Activated CD8-positive, alpha-beta T cell treated with anti-CD3 and anti-CD28 coated beads, Interleukin-2, amount 10 ng/mL, durations not matched to agents 7 days and 5 days (primary cell): ENCODE measurements at regions of chr9 and their contacts with region 1.

Region 1: GRCh38 chr9:36487482-36488388 is 85.0 kb upstream of the MELK start:
- DNase-seq: peak; percentile 90
- ATAC-seq: peak; percentile 94
- H3K4me3 Mint-ChIP-seq: peak overlapping the region; percentile 96
- H3K27ac Mint-ChIP-seq: peak overlapping the region; percentile 99
- H3K4me1 Mint-ChIP-seq: peaks cover 58% of the 10 kb centered on the region
- H3K27me3 Mint-ChIP-seq: no peaks in the 10 kb centered on the region

Region 2: DNA sequence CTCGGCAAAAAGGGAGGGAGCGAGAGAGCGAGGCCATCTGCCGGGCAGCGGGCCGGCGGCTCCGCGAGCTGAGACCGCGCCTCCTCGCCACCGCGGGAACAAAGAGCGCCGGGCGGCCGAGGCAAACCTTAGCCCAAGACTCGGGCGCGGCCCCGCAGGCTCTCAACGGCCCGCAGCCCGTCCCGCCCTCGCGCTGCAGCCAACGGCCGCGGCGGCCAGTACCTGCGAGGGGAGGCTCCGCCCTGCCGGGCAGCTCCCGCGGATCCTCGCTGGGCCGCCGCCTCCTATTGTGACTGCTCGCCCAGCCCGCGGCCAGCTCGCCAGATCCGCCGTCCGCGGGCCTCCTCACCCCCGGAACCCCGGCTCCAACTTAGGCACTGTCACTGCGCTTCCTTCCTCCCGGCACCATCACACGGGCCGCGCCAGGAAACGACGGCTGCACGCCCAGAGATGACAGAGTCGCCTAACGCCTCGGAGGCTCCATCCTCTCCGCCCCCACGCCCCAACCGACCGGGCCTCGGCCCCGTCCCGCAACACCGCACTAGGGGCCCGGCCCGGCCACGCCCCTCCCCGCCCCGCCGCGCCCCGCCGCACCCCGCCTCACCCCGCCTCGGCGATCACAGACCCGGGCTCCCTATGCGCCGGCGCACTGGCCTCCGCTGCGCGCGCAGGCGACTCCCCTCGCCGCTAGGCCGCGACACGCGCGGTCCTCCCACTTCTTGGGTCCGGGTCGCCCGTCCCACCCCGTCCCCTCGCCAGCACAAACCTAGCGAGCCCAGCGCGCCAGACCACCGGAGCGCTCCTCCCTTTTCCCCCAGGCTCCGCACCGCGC is 87.2 kb before region 1 on chr9:
- CTCF ChIA-PET with region 1: no interaction called
- POLR2A ChIA-PET with region 1: interaction called, 11 read pairs
- DNase-seq: peak; percentile 91
- ATAC-seq: peak; percentile 80
- H3K4me3 Mint-ChIP-seq: peak overlapping the region; percentile 91
- H3K27ac Mint-ChIP-seq: peak overlapping the region; percentile 95
- H3K4me1 Mint-ChIP-seq: peaks cover 42% of the 10 kb centered on the region
- H3K27me3 Mint-ChIP-seq: no peaks in the 10 kb centered on the region

Region 3: DNA sequence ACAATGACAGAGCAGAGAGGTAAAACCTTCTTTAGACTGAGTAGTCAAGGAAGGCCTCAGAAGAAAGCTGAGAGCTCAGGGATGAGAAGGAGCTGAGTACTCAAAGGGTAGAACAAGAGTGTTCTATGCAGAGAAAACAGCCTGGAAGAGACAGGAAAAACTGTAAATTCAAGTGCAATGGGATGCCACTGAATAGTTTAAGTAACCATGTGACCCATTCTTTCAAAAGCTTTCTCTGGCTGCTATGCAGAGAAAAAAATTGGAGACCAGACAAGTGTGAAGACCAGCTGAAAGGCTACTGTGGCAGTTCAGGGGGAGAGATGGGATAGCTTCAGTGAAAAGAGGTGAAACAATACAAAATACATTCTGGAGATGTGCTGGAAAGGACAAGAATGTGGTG is 26.4 kb before region 1 on chr9:
- CTCF ChIA-PET with region 1: interaction called, 4 read pairs
- POLR2A ChIA-PET with region 1: interaction called, 39 read pairs
- DNase-seq: no peak
- ATAC-seq: no peak
- H3K4me3 Mint-ChIP-seq: no peak overlapping the region
- H3K27ac Mint-ChIP-seq: no peak overlapping the region
- H3K4me1 Mint-ChIP-seq: peaks cover 64% of the 10 kb centered on the region
- H3K27me3 Mint-ChIP-seq: no peaks in the 10 kb centered on the region

Region 4: GRCh38 chr9:36470643-36471290 is 17.0 kb before region 1 on chr9:
- CTCF ChIA-PET with region 1: interaction called, 17 read pairs
- POLR2A ChIA-PET with region 1: interaction called, 44 read pairs
- DNase-seq: peak; percentile 80
- ATAC-seq: peak; percentile 98
- H3K4me3 Mint-ChIP-seq: peak overlapping the region; percentile 79
- H3K27ac Mint-ChIP-seq: peak overlapping the region; percentile 92
- H3K4me1 Mint-ChIP-seq: peaks cover 35% of the 10 kb centered on the region
- H3K27me3 Mint-ChIP-seq: no peaks in the 10 kb centered on the region

Region 5: DNA sequence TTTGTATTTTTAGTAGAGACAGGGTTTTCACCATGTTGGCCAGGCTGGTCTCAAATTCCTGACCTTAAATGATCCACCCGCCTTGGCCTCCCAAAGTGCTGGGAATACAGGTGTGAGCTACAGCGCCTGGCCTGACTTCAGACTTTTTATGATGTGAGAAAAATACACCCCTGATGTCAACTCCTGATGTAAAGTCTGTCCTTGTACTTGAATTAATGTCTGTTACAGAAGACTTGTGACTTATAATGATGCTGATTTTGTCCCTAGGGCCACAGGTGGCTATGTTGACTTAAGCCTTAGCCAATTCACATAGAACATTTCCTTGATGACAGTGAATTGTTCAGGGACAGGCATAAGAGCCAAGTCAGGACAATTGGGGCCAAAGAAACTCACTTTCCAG is 42.5 kb after region 1 on chr9:
- CTCF ChIA-PET with region 1: no interaction called
- POLR2A ChIA-PET with region 1: no interaction called
- DNase-seq: no peak
- ATAC-seq: no peak
- H3K4me3 Mint-ChIP-seq: no peak overlapping the region
- H3K27ac Mint-ChIP-seq: no peak overlapping the region
- H3K4me1 Mint-ChIP-seq: peaks cover 7% of the 10 kb centered on the region
- H3K27me3 Mint-ChIP-seq: peaks cover 11% of the 10 kb centered on the region